K562 (cell line): ENCODE measurements at regions of chr12 and their contacts with region 1.

Region 1: GRCh38 chr12:108514973-108515814 is at the start of gene FICD:
- DNase-seq: peak; percentile 94 to 100 (median 96)
- ATAC-seq: peak; percentile 94
- H3K4me3 ChIP-seq: peak within 1 kb of the TSS; percentile 67
- H3K27ac ChIP-seq: peak within 1 kb of the TSS; percentile 79
- H3K4me1 ChIP-seq: peaks cover 8 to 23% of the 10 kb centered on the region in 2 experiments; a peak in 4 of 5 replicates
- H3K27me3 ChIP-seq: no peaks in the 10 kb centered on the region
- CTCF ChIP-seq: 0 out of 6 replicates have a peak, but pooled peaks of 1 of the 3 experiments have one; percentile 10
- EP300 ChIP-seq: no peak
- POLR2A ChIP-seq: peak; percentile 82
- RAD21 ChIP-seq: no peak
- polyA plus RNA-seq, gene FICD: 1.1 to 1.2 TPM

Region 2: DNA sequence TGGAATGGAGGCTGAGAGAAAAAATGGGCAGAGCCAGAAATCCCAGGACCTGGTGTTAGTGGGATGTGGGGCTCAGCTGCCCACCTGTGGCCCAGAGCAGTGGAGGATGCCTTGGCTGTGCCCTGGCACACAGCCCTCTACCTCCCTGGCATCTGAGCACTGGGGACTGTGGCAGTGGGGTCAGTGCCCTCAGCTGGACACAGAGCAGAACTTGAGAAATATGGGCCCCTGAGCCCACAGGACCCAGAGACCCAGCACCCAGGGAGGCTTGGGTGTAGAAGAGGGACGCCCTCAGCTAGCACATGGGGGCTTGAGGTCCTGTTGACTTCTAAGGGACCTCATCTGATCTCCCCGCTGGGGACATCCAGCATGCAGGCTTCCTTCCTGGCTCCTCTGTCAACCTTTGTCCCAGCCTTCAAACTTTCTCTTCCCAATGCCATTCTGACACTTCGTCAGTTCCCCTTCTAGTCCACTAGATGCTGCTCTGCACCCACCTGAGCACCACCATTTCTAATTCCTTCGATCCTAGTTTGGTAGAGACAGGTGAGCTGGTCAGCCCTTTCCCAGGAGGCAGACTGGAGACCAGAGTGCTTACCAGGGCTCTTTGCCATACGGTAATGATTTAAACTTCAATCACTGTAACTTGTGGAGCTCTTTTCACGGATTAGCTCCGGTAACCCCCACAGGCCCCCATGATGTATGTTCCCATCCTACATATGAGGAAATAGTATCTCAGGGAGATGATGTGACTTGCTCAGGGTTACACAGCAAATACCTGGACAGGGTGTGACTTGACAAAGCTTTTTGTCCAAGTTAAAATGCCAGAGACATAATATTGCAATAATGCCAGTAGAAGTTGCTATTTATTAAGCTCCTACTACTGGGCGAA is 597.0 kb before region 1 on chr12:
- CTCF ChIA-PET with region 1: no interaction called
- POLR2A ChIA-PET with region 1: no interaction called
- in situ Hi-C with region 1: no loop called
- intact Hi-C with region 1: loop called (anchors 5 kb)
- DNase-seq: peak; percentile 23 to 42 (median 25)
- ATAC-seq: peak; percentile 80
- H3K4me3 ChIP-seq: no peak overlapping the region
- H3K27ac ChIP-seq: no peak overlapping the region
- H3K4me1 ChIP-seq: peaks cover 3 to 8% of the 10 kb centered on the region in 2 experiments; a peak in 3 of 5 replicates
- H3K27me3 ChIP-seq: peaks cover 0 to 10% of the 10 kb centered on the region in 2 experiments; a peak in 3 of 5 replicates
- CTCF ChIP-seq: peak; percentile 72 to 83 (median 75)
- EP300 ChIP-seq: no peak
- POLR2A ChIP-seq: no peak
- RAD21 ChIP-seq: peak; percentile 47 to 73

Region 3: GRCh38 chr12:107992870-107993451 is 522.2 kb before region 1 on chr12:
- CTCF ChIA-PET with region 1: no interaction called
- POLR2A ChIA-PET with region 1: interaction called, 3 read pairs
- in situ Hi-C with region 1: no loop called
- intact Hi-C with region 1: loop called (anchors 5 kb)
- DNase-seq: peak; percentile 27 to 51 (median 38)
- ATAC-seq: peak; percentile 98
- H3K4me3 ChIP-seq: no peak overlapping the region
- H3K27ac ChIP-seq: no peak overlapping the region
- H3K4me1 ChIP-seq: no peaks in the 10 kb centered on the region
- H3K27me3 ChIP-seq: no peaks in the 10 kb centered on the region
- CTCF ChIP-seq: peak; percentile 53 to 82 (median 65)
- EP300 ChIP-seq: no peak
- POLR2A ChIP-seq: no peak
- RAD21 ChIP-seq: peak; percentile 15 to 48; a peak in 2 of 4 replicates

Region 4: GRCh38 chr12:108531929-108532848 is 17.0 kb after region 1 on chr12:
- CTCF ChIA-PET with region 1: no interaction called
- POLR2A ChIA-PET with region 1: interaction called, 15 read pairs
- in situ Hi-C with region 1: no loop called
- intact Hi-C with region 1: no loop called
- DNase-seq: peak in 2 of 4 experiments; percentile 77 to 82
- ATAC-seq: peak; percentile 98
- H3K4me3 ChIP-seq: no peak overlapping the region
- H3K27ac ChIP-seq: peak overlapping the region; percentile 66
- H3K4me1 ChIP-seq: peaks cover 7 to 14% of the 10 kb centered on the region in 2 experiments
- H3K27me3 ChIP-seq: no peaks in the 10 kb centered on the region
- CTCF ChIP-seq: no peak
- EP300 ChIP-seq: no peak
- POLR2A ChIP-seq: no peak
- RAD21 ChIP-seq: no peak

Region 5: GRCh38 chr12:108618079-108618952 is 103.1 kb after region 1 on chr12:
- CTCF ChIA-PET with region 1: no interaction called
- POLR2A ChIA-PET with region 1: interaction called, 3 read pairs
- in situ Hi-C with region 1: no loop called
- intact Hi-C with region 1: loop called (anchors 1 kb)
- DNase-seq: peak; percentile 82 to 91 (median 84)
- ATAC-seq: peak; percentile 94
- H3K4me3 ChIP-seq: no peak overlapping the region
- H3K27ac ChIP-seq: no peak overlapping the region
- H3K4me1 ChIP-seq: peaks cover 16 to 20% of the 10 kb centered on the region in 2 experiments; a peak in 3 of 5 replicates
- H3K27me3 ChIP-seq: no peaks in the 10 kb centered on the region
- CTCF ChIP-seq: peak; percentile 91 to 97 (median 96)
- EP300 ChIP-seq: no peak
- POLR2A ChIP-seq: no peak
- RAD21 ChIP-seq: peak; percentile 91 to 94